ENCODE measurements at regions of chr15 and their contacts with region 1.

Region 1: GRCh38 chr15:84748274-84749110 is at the start of gene ZNF592:
- DNase-seq: peak; percentile 86
- ATAC-seq: peak; percentile 55
- H3K4me3 Mint-ChIP-seq: peak within 1 kb of the TSS; percentile 94
- H3K27ac Mint-ChIP-seq: peak within 1 kb of the TSS; percentile 97
- H3K4me1 Mint-ChIP-seq: peaks cover 59% of the 10 kb centered on the region
- H3K27me3 Mint-ChIP-seq: no peaks in the 10 kb centered on the region
- total RNA-seq, gene ZNF592: 25.5 to 30.8 TPM

Region 2: DNA sequence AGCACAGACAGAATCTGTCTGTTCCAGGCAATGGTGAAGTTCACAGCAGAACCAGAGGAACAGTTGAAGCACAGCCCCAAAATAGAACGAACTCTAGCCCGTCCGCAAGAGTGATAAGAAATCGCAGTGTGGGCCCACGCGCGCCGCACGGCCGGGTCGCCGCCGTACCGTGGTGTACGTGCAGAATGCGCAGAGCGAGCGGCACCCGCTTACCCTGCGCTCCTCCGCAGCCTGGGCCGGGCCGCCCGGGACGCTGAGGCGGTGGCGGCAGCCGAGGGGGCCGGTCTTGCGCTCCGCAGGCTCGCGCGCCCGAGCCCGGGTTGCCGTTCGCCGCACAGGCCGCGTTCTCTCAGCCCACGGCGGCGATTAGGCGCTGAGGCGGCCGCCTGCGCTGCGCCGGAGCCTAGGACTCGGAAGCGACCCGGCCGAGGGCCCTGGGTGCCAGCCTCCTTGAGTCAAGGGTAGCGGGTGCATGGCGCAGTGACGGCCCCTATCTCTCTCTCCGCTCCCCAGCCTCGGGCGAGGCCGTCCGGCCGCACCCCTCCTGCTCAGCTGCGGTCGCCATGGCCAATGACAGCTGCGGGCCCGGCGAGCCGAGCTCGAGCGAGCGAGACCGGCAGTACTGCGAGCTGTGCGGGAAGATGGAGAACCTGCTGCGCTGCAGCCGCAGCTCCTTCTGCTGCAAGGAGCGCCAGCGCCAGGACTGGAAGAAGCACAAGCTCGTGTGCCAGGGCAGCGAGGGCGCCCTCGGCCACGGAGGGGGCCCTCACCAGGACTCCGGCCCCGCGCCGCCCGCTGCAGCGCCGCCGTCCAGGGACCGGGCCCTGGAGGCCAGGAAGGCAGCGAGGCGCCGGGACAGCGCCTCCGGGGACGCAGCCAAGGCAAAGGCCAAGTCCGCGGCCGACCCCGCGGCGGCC is 114.9 kb before region 1 on chr15:
- CTCF ChIA-PET with region 1: no interaction called
- POLR2A ChIA-PET with region 1: no interaction called
- intact Hi-C with region 1: loop called (anchors 1 kb)
- DNase-seq: peak; percentile 87
- ATAC-seq: peak; percentile 57
- H3K4me3 Mint-ChIP-seq: peak overlapping the region; percentile 93
- H3K27ac Mint-ChIP-seq: peak overlapping the region; percentile 99
- H3K4me1 Mint-ChIP-seq: peaks cover 45% of the 10 kb centered on the region
- H3K27me3 Mint-ChIP-seq: no peaks in the 10 kb centered on the region

Region 3: GRCh38 chr15:84669726-84670125 is 78.8 kb before region 1 on chr15:
- CTCF ChIA-PET with region 1: interaction called, 3 read pairs
- POLR2A ChIA-PET with region 1: no interaction called
- intact Hi-C with region 1: loop called in 1 of 2 experiments (anchors 1 kb)
- DNase-seq: peak; percentile 77
- ATAC-seq: peak; percentile 27
- H3K4me3 Mint-ChIP-seq: no peak overlapping the region
- H3K27ac Mint-ChIP-seq: peak overlapping the region; percentile 64
- H3K4me1 Mint-ChIP-seq: peaks cover 56% of the 10 kb centered on the region
- H3K27me3 Mint-ChIP-seq: no peaks in the 10 kb centered on the region

Region 4: GRCh38 chr15:84734794-84735479 is 13.6 kb before region 1 on chr15:
- CTCF ChIA-PET with region 1: interaction called, 10 read pairs
- POLR2A ChIA-PET with region 1: interaction called, 14 read pairs
- intact Hi-C with region 1: loop called (anchors 1 kb)
- DNase-seq: peak; percentile 87
- ATAC-seq: peak; percentile 72
- H3K4me3 Mint-ChIP-seq: peak overlapping the region; percentile 59
- H3K27ac Mint-ChIP-seq: peak overlapping the region; percentile 97
- H3K4me1 Mint-ChIP-seq: peaks cover 63% of the 10 kb centered on the region
- H3K27me3 Mint-ChIP-seq: no peaks in the 10 kb centered on the region

Region 5: GRCh38 chr15:84761607-84762131 is 13.2 kb after region 1 on chr15:
- CTCF ChIA-PET with region 1: interaction called, 3 read pairs
- POLR2A ChIA-PET with region 1: no interaction called
- intact Hi-C with region 1: loop called in 1 of 2 experiments (anchors 1 kb)
- DNase-seq: peak; percentile 28
- ATAC-seq: peak; percentile 83
- H3K4me3 Mint-ChIP-seq: no peak overlapping the region
- H3K27ac Mint-ChIP-seq: no peak overlapping the region
- H3K4me1 Mint-ChIP-seq: peaks cover 14% of the 10 kb centered on the region
- H3K27me3 Mint-ChIP-seq: no peaks in the 10 kb centered on the region

Region 6: GRCh38 chr15:84797212-84797611 is 48.7 kb after region 1 on chr15:
- CTCF ChIA-PET with region 1: no interaction called
- POLR2A ChIA-PET with region 1: no interaction called
- intact Hi-C with region 1: no loop called
- DNase-seq: no peak
- ATAC-seq: no peak
- H3K4me3 Mint-ChIP-seq: no peak overlapping the region
- H3K27ac Mint-ChIP-seq: no peak overlapping the region
- H3K4me1 Mint-ChIP-seq: no peaks in the 10 kb centered on the region
- H3K27me3 Mint-ChIP-seq: no peaks in the 10 kb centered on the region

Region 7: GRCh38 chr15:84937144-84937543 is 188.7 kb after region 1 on chr15:
- CTCF ChIA-PET with region 1: no interaction called
- POLR2A ChIA-PET with region 1: no interaction called
- intact Hi-C with region 1: no loop called
- DNase-seq: no peak
- ATAC-seq: no peak
- H3K4me3 Mint-ChIP-seq: no peak overlapping the region
- H3K27ac Mint-ChIP-seq: no peak overlapping the region
- H3K4me1 Mint-ChIP-seq: no peaks in the 10 kb centered on the region
- H3K27me3 Mint-ChIP-seq: no peaks in the 10 kb centered on the region

Region 8: GRCh38 chr15:84973492-84974460 is 225.3 kb after region 1 on chr15:
- CTCF ChIA-PET with region 1: no interaction called
- POLR2A ChIA-PET with region 1: no interaction called
- intact Hi-C with region 1: no loop called
- DNase-seq: no peak
- ATAC-seq: no peak
- H3K4me3 Mint-ChIP-seq: no peak overlapping the region
- H3K27ac Mint-ChIP-seq: no peak overlapping the region
- H3K4me1 Mint-ChIP-seq: no peaks in the 10 kb centered on the region
- H3K27me3 Mint-ChIP-seq: no peaks in the 10 kb centered on the region

Measured in activated CD4-positive, alpha-beta T cell treated with anti-CD3 and anti-CD28 coated beads for 36 hours (primary cell).